B cell (primary cell): ENCODE measurements at regions of chr20 and their contacts with region 1.

Region 1: DNA sequence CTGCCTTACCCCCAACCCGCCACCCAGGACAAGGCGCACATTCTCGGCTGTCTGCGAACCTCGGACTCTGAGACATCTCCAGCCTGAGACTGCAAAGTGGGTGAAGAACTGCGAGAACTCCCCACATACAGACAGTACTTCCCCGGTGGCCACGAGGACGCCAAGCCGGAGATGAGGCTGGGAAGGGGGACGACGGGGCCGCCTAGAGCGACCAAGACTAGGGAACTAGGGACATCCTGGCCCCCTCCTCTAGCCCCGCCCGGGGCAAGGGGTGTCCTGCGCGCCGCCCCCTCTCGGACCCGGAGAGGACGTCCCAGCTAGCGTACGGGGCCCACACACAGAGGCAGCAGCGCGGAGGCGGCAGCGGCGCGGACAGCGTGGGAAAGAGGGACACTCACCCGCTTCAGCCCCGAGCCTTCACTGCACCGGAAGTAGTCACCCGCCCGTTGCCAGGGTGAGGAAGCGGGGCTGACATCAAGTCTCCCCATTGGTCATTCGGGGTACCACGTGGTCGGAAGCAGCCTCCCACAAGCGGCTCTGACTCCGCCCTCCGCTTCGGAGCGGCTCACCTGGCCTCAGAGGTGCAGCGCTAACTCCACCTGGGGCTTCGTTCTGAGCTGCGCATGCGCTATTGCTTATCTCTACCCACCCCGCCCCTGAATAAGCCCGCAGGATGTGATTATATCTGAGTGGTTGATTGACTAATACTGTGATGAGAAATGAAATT is at the start of gene TASP1:
- DNase-seq: peak; percentile 97
- ATAC-seq: peak; percentile 99
- H3K4me3 ChIP-seq: peak within 1 kb of the TSS; percentile 74 to 84 (median 84)
- H3K4me3 Mint-ChIP-seq: peak within 1 kb of the TSS; percentile 99
- H3K27ac ChIP-seq: peak within 1 kb of the TSS; percentile 53 to 88
- H3K27ac Mint-ChIP-seq: peak within 1 kb of the TSS; percentile 92
- H3K4me1 ChIP-seq: peaks cover 8 to 10% of the 10 kb centered on the region in 2 donors
- H3K4me1 Mint-ChIP-seq: peaks cover 16% of the 10 kb centered on the region
- H3K27me3 ChIP-seq: peaks cover 0 to 6% (median 3%) of the 10 kb centered on the region in 4 experiments
- H3K27me3 Mint-ChIP-seq: peaks cover 11% of the 10 kb centered on the region
- CTCF ChIP-seq: no peak
- total RNA-seq, gene TASP1: 23.9 and 25.7 TPM in 2 replicates

Region 2: GRCh38 chr20:13552061-13552460 is 86.6 kb before region 1 on chr20:
- CTCF ChIA-PET with region 1: no interaction called
- POLR2A ChIA-PET with region 1: no interaction called
- intact Hi-C with region 1: no loop called
- DNase-seq: no peak
- ATAC-seq: no peak
- H3K4me3 ChIP-seq: no peak overlapping the region
- H3K4me3 Mint-ChIP-seq: no peak overlapping the region
- H3K27ac ChIP-seq: no peak overlapping the region
- H3K27ac Mint-ChIP-seq: no peak overlapping the region
- H3K4me1 ChIP-seq: no peaks in the 10 kb centered on the region
- H3K4me1 Mint-ChIP-seq: no peaks in the 10 kb centered on the region
- H3K27me3 ChIP-seq: no peaks in the 10 kb centered on the region
- H3K27me3 Mint-ChIP-seq: no peaks in the 10 kb centered on the region
- CTCF ChIP-seq: no peak

Region 3: DNA sequence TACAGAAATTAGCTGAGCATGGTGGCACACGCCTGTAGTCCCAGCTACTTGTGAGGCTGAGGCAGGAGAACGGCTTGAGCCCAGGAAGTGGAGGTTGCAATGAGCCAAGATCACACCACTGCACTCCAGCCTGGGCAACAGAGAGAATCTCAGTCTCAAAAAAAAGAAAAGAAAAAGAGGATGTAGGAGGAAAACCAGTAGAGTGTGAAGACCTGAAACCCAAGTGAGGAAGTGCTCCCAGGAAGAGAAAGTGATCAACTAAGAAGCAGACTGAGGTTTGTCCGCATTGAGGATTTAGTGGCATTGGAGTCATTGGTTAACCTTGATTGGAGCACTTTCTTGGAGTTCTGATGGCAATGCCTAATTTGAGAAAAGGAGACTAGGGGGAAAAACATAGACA is 20.6 kb after region 1 on chr20:
- CTCF ChIA-PET with region 1: no interaction called
- POLR2A ChIA-PET with region 1: no interaction called
- intact Hi-C with region 1: loop called (anchors 1 kb)
- DNase-seq: peak; percentile 78
- ATAC-seq: peak; percentile 98
- H3K4me3 ChIP-seq: peak overlapping the region in 1 of 5 experiments; percentile 27
- H3K4me3 Mint-ChIP-seq: peak overlapping the region; percentile 42
- H3K27ac ChIP-seq: peak overlapping the region in 1 of 2 donors; percentile 55
- H3K27ac Mint-ChIP-seq: peak overlapping the region; percentile 68
- H3K4me1 ChIP-seq: peaks cover 21% of the 10 kb centered on the region in 2 donors
- H3K4me1 Mint-ChIP-seq: peaks cover 21% of the 10 kb centered on the region
- H3K27me3 ChIP-seq: no peaks in the 10 kb centered on the region
- H3K27me3 Mint-ChIP-seq: peaks cover 6% of the 10 kb centered on the region
- CTCF ChIP-seq: no peak

Region 4: GRCh38 chr20:13784893-13785715 is 146.4 kb after region 1 on chr20 and contains the starts of genes ESF1 and NDUFAF5:
- CTCF ChIA-PET with region 1: no interaction called
- POLR2A ChIA-PET with region 1: interaction called, 3 read pairs
- intact Hi-C with region 1: loop called (anchors 1 kb)
- DNase-seq: peak; percentile 95
- ATAC-seq: peak; percentile 98
- H3K4me3 ChIP-seq: peak within 1 kb of the TSS; percentile 68 to 91 (median 85)
- H3K4me3 Mint-ChIP-seq: peak within 1 kb of the TSS; percentile 98
- H3K27ac ChIP-seq: peak within 1 kb of the TSS; percentile 85 to 91
- H3K27ac Mint-ChIP-seq: peak within 1 kb of the TSS; percentile 96
- H3K4me1 ChIP-seq: peaks cover 19 to 23% of the 10 kb centered on the region in 2 donors
- H3K4me1 Mint-ChIP-seq: peaks cover 49% of the 10 kb centered on the region
- H3K27me3 ChIP-seq: no peaks in the 10 kb centered on the region
- H3K27me3 Mint-ChIP-seq: no peaks in the 10 kb centered on the region
- CTCF ChIP-seq: no peak
- total RNA-seq, gene ESF1: 13.8 and 13.9 TPM in 2 replicates
- total RNA-seq, gene NDUFAF5: 28.8 and 32.3 TPM in 2 replicates